HAP-1 (cell line): ENCODE measurements at regions of chr10 and their contacts with region 1.

Region 1: GRCh38 chr10:58299580-58299979 is 30.6 kb downstream of the CISD1 start:
- DNase-seq: peak; percentile 69 to 86
- H3K4me3 ChIP-seq: no peak overlapping the region
- H3K4me1 ChIP-seq: peaks cover 7% of the 10 kb centered on the region
- H3K27me3 ChIP-seq: no peaks in the 10 kb centered on the region

Region 2: GRCh38 chr10:58177362-58177947 is 122.1 kb before region 1 on chr10:
- in situ Hi-C with region 1: loop called (anchors 25 kb)
- DNase-seq: peak in 1 of 2 experiments; percentile 59
- H3K4me3 ChIP-seq: no peak overlapping the region
- H3K4me1 ChIP-seq: no peaks in the 10 kb centered on the region
- H3K27me3 ChIP-seq: no peaks in the 10 kb centered on the region

Region 3: DNA sequence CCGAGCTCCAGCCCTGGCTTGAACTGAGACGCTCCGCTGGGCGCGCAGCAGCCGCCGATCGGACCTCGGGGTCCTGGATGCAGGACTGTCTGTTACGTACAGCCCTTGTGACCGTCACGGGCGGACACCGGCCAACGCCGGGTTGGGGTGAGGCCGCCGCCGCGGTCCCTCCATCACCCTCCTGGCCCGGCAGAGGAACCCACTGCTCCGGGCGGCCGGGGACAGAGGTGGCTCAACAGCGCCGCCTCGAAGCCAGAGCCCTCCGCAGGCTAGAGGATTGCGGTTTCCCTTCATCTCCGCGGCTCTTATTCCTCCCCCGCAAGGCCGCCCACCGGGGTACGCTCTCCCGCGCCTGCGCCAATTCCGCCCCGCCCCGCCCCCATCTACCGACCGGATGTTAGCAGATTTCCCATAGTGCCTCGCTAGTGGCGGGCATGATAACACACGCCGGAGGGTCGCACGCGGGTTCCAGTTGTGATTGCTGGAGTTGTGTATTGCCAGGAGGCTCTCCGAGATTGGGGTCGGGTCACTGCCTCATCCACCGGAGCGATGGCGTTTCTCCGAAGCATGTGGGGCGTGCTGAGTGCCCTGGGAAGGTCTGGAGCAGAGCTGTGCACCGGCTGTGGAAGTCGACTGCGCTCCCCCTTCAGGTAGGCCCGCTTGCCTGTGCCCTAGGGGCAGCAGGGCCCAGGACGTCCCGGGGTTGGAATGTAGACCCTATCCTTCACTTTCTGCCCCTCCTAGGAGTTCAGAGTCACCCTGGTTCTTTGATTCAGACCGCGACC is 85.6 kb after region 1 on chr10 and contains the start of gene TFAM:
- in situ Hi-C with region 1: loop called (anchors 10 kb)
- DNase-seq: peak; percentile 96 to 99
- H3K4me3 ChIP-seq: peak within 1 kb of the TSS; percentile 88
- H3K4me1 ChIP-seq: peaks cover 12% of the 10 kb centered on the region
- H3K27me3 ChIP-seq: no peaks in the 10 kb centered on the region

Region 4: DNA sequence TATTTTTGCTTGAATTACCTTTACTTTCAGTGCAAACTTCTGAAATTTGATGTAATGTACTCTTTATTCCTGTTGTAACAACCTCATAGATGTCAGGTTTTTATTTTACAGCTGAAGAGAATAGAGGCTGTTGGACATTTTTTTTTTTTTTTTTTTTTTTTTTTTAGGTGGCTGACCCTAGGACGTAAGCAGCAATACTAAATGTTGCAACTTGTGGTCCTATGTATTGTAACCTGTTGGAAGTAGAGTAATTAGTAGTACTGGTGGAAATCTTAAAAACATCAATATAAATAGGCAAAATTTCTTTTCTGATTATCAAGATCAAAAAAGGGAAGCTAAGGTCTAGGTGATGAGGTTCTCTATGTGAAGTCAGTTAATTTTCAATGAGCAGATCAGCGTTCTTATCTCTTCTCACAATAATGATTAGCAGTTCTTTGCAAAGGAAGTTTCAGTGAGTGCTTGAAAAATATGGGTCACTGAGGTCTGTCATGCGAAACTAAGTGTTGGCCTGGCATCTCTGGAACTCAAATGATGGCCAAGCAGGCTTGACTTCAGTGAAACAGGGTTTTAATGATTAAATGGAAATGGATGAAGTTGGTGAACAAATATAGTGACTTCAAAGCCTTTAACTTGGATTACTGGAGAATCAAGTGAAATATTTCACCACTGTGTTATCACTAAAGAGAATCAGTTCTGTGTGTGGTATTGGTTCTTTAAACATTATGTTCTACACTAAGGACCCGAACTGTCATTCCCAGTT is 255.8 kb after region 1 on chr10:
- in situ Hi-C with region 1: no loop called
- DNase-seq: no peak
- H3K4me3 ChIP-seq: no peak overlapping the region
- H3K4me1 ChIP-seq: no peaks in the 10 kb centered on the region
- H3K27me3 ChIP-seq: no peaks in the 10 kb centered on the region